A673 (cell line): ENCODE measurements at regions of chr5 and their contacts with region 1.

Region 1: GRCh38 chr5:166726406-166726805 is 1565.0 kb upstream of the WWC1 start:
- DNase-seq: no peak
- H3K4me3 ChIP-seq: no peak overlapping the region
- H3K27ac ChIP-seq: no peak overlapping the region
- H3K4me1 ChIP-seq: no peaks in the 10 kb centered on the region
- H3K27me3 ChIP-seq: no peaks in the 10 kb centered on the region
- CTCF ChIP-seq: no peak

Region 2: GRCh38 chr5:166398131-166398530 is 328.3 kb before region 1 on chr5:
- CTCF ChIA-PET with region 1: interaction called, 14 read pairs
- POLR2A ChIA-PET with region 1: no interaction called
- intact Hi-C with region 1: no loop called
- DNase-seq: no peak
- H3K4me3 ChIP-seq: no peak overlapping the region
- H3K27ac ChIP-seq: no peak overlapping the region
- H3K4me1 ChIP-seq: no peaks in the 10 kb centered on the region
- H3K27me3 ChIP-seq: no peaks in the 10 kb centered on the region
- CTCF ChIP-seq: no peak

Region 3: GRCh38 chr5:168057905-168058304 is 1331.5 kb after region 1 on chr5:
- CTCF ChIA-PET with region 1: no interaction called
- POLR2A ChIA-PET with region 1: no interaction called
- intact Hi-C with region 1: no loop called
- DNase-seq: no peak
- H3K4me3 ChIP-seq: no peak overlapping the region
- H3K27ac ChIP-seq: no peak overlapping the region
- H3K4me1 ChIP-seq: peaks cover 24% of the 10 kb centered on the region
- H3K27me3 ChIP-seq: no peaks in the 10 kb centered on the region
- CTCF ChIP-seq: no peak